Natural killer cell (primary cell): ENCODE measurements at regions of chr5 and their contacts with region 1.

Region 1: DNA sequence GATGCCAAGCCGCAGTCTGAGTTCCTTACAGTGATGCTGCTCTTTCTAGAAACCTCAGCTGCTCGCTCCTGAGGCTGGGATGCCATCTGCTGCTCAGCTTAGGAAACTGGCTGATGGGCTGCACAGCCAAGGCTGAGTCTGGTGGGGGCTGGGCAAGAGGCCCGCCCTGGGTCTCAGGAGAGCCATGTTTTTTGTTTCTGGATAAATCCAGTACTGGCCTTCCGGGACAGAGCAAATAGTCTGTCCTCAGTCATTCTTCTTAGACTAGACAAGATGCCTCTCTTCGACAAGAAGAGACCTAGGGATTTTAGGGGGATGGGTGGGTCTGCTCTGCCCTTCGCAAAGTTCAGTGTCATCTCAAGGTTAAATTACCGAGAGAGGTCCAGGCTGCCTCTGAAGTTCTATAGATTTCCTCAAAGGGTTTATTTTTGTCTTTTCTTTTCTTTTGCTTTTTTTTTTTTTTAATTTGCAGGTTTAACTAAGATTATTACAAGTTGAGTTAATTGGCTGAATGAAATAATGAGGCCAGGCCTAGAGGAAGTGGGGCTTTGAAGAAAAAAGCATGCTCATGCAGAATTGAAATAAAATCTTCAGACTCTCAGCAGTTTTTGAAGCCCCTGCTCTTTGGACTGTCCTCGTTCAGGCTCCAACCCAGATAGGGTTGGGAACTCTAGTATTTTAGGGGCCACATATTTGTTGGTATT is 30.6 kb upstream of the MATR3 start:
- DNase-seq: peak; percentile 21 to 79
- ATAC-seq: peak; percentile 69 to 90 (median 78)
- H3K4me3 ChIP-seq: no peak overlapping the region
- H3K4me3 Mint-ChIP-seq: no peak overlapping the region
- H3K27ac ChIP-seq: no peak overlapping the region
- H3K27ac Mint-ChIP-seq: no peak overlapping the region
- H3K4me1 ChIP-seq: no peaks in the 10 kb centered on the region
- H3K4me1 Mint-ChIP-seq: peaks cover 0 to 5% of the 10 kb centered on the region in 2 donors
- H3K27me3 ChIP-seq: no peaks in the 10 kb centered on the region
- H3K27me3 Mint-ChIP-seq: peaks cover 2 to 25% of the 10 kb centered on the region in 2 donors
- CTCF ChIP-seq: peak; percentile 16

Region 2: DNA sequence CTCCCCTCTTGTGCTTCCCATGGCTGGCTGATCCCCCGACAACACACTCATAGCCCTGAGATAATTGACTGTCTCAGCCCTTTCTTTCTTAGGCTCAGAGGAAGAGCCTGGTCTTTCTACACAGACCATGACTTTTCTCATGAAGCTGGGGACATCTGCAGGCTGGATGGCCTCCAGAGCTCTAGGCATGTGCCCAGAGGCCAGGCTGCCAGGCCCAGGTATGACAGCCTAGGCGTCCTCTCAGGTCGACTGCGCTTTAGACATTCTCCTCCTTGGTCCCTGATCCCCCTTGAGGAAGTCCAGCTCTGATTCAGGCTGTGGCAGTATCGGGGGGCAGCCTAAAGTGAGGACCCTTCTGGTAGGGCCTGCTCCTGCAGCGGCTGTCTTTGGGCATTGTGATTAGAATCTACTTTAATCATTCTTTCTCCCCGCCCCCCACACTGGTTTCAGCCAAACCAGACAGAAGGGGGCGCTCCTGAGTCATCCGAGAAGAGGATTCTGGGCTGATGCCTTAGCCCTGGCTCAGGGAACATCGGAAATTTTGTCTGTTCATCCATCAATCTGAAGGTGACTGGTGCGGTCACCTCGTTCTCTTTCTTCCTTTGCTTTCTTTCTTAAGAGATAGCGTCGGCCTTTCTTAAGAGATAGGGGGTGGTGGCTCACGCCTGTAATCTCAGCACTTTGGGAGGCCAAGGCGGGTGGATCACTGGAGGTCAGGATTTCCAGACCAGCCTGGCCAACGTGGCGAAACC is 621.2 kb before region 1 on chr5:
- intact Hi-C with region 1: loop called (anchors 5 kb)
- DNase-seq: peak; percentile 54 to 76
- ATAC-seq: peak; percentile 52 to 80 (median 79)
- H3K4me3 ChIP-seq: no peak overlapping the region
- H3K4me3 Mint-ChIP-seq: no peak overlapping the region
- H3K27ac ChIP-seq: no peak overlapping the region
- H3K27ac Mint-ChIP-seq: no peak overlapping the region
- H3K4me1 ChIP-seq: no peaks in the 10 kb centered on the region
- H3K4me1 Mint-ChIP-seq: no peaks in the 10 kb centered on the region
- H3K27me3 ChIP-seq: peaks cover 38% of the 10 kb centered on the region
- H3K27me3 Mint-ChIP-seq: peaks cover 29 to 36% of the 10 kb centered on the region in 2 donors
- CTCF ChIP-seq: peak; percentile 68